Heart right ventricle (tissue), 16 donors: ENCODE measurements at regions of chr11 and their contacts with region 1.

Region 1: GRCh38 chr11:842370-843002 is at the starts of genes POLR2L and TSPAN4:
- DNase-seq: peak; percentile 91 to 92
- ATAC-seq: peak in 7 of 8 donors; percentile 18 to 58 (median 48)
- H3K4me3 ChIP-seq: peak within 1 kb of the TSS; percentile 71 to 100 (median 96)
- H3K27ac ChIP-seq: peak within 1 kb of the TSS; percentile 94 to 100 (median 97)
- H3K4me1 ChIP-seq: peaks cover 32 to 87% (median 67%) of the 10 kb centered on the region in 9 donors
- H3K27me3 ChIP-seq: no peaks in the 10 kb centered on the region
- CTCF ChIP-seq: no peak
- total RNA-seq, gene POLR2L: 194 to 279 (median 234) TPM
- total RNA-seq, gene TSPAN4: 22.2 to 46.4 (median 26.9) TPM

Region 2: DNA sequence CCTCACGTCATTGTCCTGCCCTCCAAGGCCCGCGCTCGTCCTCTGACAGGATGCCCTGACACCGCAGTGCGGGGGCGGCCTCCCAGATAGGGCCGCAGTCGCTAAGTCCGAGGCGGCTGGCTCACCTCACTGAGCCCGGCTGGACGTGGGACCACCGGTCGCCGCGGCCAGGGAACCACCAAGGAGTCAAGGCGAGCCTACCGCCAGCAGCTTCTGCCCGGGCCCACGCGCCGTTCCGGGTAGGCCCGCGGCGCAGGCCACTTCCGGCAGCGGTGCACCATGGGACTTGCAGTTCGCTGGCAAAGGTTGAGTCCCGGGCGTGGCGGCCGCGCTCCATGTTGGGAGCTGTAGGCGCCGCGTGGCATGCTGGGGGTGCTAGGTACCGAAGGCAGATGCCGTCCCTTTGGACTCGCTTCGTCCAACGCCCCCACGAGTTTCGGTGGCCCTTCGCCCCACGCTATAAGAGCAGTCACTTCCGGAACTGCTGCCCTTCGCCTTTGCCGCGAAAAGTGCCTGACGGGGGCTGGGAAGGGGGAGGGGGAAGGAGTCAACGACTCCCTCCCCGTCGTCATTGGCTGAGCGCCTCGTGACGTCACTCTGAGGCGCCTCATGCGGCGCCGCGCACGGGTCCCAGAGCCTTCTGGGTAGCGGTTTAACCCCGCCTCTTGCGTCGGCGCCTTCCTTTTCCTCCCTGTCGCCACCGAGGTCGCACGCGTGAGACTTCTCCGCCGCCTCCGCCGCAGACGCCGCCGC is 33.0 kb before region 1 on chr11 and contains the start of gene RPLP2:
- intact Hi-C with region 1: loop called in 4 of 10 experiments (anchors 2 to 5 kb)
- DNase-seq: peak; percentile 98 to 99
- ATAC-seq: peak; percentile 88 to 96 (median 94)
- H3K4me3 ChIP-seq: peak within 1 kb of the TSS; percentile 47 to 99 (median 92)
- H3K27ac ChIP-seq: peak within 1 kb of the TSS; percentile 92 to 99 (median 96)
- H3K4me1 ChIP-seq: peaks cover 8 to 49% (median 36%) of the 10 kb centered on the region in 9 donors
- H3K27me3 ChIP-seq: no peaks in the 10 kb centered on the region
- CTCF ChIP-seq: no peak
- total RNA-seq, gene RPLP2: 765 to 1,177 (median 850) TPM